Naive thymus-derived CD4-positive, alpha-beta T cell (primary cell): ENCODE measurements at regions of chr12 and their contacts with region 1.

Region 1: DNA sequence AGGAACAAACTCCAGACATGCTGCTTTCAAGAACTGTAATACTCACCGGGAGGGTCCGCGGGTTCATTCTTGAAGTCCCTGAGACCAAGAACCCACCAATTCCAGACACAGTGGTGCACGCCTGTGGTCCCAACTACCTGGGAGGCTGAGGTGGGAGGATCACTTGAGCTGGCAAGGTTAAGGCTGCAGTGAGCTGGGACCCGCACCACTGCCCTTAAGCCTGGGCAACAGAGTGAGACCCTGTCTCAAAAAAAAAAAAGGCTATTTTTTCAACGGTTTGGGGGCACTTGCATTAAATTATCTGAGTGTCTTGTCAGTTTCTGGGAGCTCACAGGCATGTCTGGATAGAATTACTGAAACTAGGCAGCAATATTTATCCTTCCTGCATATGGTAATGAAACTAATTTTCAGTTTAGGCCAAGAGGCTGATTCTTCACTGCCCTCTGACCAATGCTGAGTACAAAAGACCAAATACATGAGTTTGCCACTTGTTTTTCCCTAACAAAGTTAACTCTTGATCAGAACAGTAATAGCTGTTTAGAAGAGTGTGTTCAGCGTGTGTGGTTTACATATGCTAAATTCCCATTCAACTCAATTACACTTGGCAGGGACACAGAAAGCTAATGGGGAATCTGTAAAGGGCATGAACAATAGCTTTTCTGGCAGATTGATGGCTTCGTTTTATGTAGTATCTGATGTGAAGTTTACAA is 65.8 kb upstream of the RASSF3 start:
- DNase-seq: no peak
- ATAC-seq: no peak
- H3K4me3 ChIP-seq: no peak overlapping the region
- H3K4me3 Mint-ChIP-seq: no peak overlapping the region
- H3K27ac ChIP-seq: no peak overlapping the region
- H3K27ac Mint-ChIP-seq: no peak overlapping the region
- H3K4me1 ChIP-seq: no peaks in the 10 kb centered on the region
- H3K4me1 Mint-ChIP-seq: peaks cover 0 to 4% (median 2%) of the 10 kb centered on the region in 7 donors
- H3K27me3 ChIP-seq: no peaks in the 10 kb centered on the region
- H3K27me3 Mint-ChIP-seq: peaks cover 0 to 16% (median 0%) of the 10 kb centered on the region in 5 donors

Region 2: DNA sequence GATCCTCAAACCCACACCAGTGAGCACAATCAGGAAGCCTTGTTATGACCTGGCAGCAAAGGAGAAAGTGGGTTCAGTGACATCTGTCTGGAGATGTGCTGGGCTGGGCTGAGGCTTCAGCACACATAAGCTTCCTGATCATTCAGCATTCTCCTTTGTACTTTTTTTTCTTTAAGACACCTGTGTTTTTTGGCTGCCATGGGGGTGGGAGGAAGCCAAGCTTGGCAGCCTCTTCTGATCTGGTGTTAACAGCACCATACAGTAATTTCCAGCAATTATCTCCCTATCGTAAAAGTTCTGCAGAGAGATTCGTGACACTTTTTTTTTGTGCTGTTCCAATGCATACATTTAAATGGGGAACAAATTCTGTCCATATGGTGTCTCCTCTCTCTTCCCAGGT is 26.9 kb after region 1 on chr12:
- CTCF ChIA-PET with region 1: interaction called, 13 read pairs
- POLR2A ChIA-PET with region 1: no interaction called
- intact Hi-C with region 1: no loop called
- DNase-seq: peak in 7 of 9 donors; percentile 10 to 64 (median 54)
- ATAC-seq: peak; percentile 62
- H3K4me3 ChIP-seq: no peak overlapping the region
- H3K4me3 Mint-ChIP-seq: peak overlapping the region in 7 of 10 donors; percentile 2 to 57 (median 40)
- H3K27ac ChIP-seq: no peak overlapping the region
- H3K27ac Mint-ChIP-seq: peak overlapping the region in 8 of 9 donors; percentile 7 to 87 (median 65)
- H3K4me1 ChIP-seq: peaks cover 0 to 23% of the 10 kb centered on the region in 2 donors
- H3K4me1 Mint-ChIP-seq: peaks cover 15 to 60% (median 54%) of the 10 kb centered on the region in 7 donors
- H3K27me3 ChIP-seq: no peaks in the 10 kb centered on the region
- H3K27me3 Mint-ChIP-seq: no peaks in the 10 kb centered on the region